ENCODE measurements at regions of chr9 and their contacts with region 1.

Region 1: GRCh38 chr9:132406554-132407122 is at the start of gene TTF1:
- DNase-seq: peak; percentile 88 to 98
- ATAC-seq: peak; percentile 86 to 92 (median 91)
- H3K4me3 ChIP-seq: peak within 1 kb of the TSS; percentile 56
- H3K4me3 Mint-ChIP-seq: peak within 1 kb of the TSS; percentile 96
- H3K27ac ChIP-seq: peak within 1 kb of the TSS; percentile 9
- H3K27ac Mint-ChIP-seq: peak within 1 kb of the TSS; percentile 85 to 94
- H3K4me1 ChIP-seq: peaks cover 43% of the 10 kb centered on the region
- H3K4me1 Mint-ChIP-seq: peaks cover 49 to 55% of the 10 kb centered on the region in 2 donors
- H3K27me3 ChIP-seq: peaks cover 18% of the 10 kb centered on the region
- H3K27me3 Mint-ChIP-seq: peaks cover 11 to 16% of the 10 kb centered on the region in 2 donors
- CTCF ChIP-seq: no peak
- total RNA-seq, gene TTF1: 11.2 to 14.5 (median 12.9) TPM

Region 2: GRCh38 chr9:132354637-132355355 is 51.8 kb before region 1 on chr9 and contains the start of gene SETX:
- intact Hi-C with region 1: loop called (anchors 10 kb)
- DNase-seq: peak; percentile 92 to 97
- ATAC-seq: peak; percentile 81 to 92 (median 85)
- H3K4me3 ChIP-seq: peak within 1 kb of the TSS; percentile 95
- H3K4me3 Mint-ChIP-seq: peak within 1 kb of the TSS; percentile 96
- H3K27ac ChIP-seq: peak within 1 kb of the TSS; percentile 97
- H3K27ac Mint-ChIP-seq: peak within 1 kb of the TSS; percentile 77 to 96
- H3K4me1 ChIP-seq: peaks cover 45% of the 10 kb centered on the region
- H3K4me1 Mint-ChIP-seq: peaks cover 36 to 45% of the 10 kb centered on the region in 2 donors
- H3K27me3 ChIP-seq: no peaks in the 10 kb centered on the region
- H3K27me3 Mint-ChIP-seq: no peaks in the 10 kb centered on the region
- CTCF ChIP-seq: no peak
- total RNA-seq, gene SETX: 85.3 to 109 (median 97.7) TPM

Region 3: DNA sequence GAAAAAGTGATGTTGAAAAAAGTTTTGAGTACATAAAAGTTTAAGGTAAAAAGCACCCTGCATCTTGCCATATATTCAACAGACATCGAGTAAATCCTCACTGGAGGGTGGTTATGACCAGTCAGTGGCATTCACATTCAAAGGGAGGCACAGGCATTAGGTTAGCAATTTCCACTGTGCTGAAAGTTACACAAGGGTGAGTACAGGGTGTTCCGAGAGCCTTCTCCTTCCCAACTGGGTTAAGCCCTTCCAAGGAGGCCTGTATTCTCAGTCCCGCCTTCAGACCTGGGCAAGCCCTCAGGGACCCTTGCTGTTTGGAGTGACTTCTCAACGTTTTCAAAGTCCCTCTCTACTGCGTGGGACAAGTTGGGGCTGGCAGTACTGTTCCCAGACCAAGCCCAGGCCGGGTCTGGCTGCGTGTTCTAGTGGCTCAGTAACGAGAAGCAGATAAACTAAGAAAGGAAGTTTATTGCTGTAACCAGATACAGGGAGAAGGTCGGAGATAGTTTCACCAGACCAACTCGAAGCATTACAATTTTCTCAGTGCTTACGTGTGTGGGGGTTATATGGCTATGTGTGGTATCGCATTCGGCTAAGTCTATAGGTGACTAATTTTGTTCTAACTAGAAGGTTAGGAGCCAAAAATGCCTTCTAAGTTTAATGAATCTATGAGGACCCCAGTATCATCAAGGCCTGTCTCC is 38.9 kb before region 1 on chr9:
- intact Hi-C with region 1: no loop called
- DNase-seq: no peak
- ATAC-seq: no peak
- H3K4me3 ChIP-seq: no peak overlapping the region
- H3K4me3 Mint-ChIP-seq: no peak overlapping the region
- H3K27ac ChIP-seq: no peak overlapping the region
- H3K27ac Mint-ChIP-seq: no peak overlapping the region
- H3K4me1 ChIP-seq: peaks cover 6% of the 10 kb centered on the region
- H3K4me1 Mint-ChIP-seq: peaks cover 8% of the 10 kb centered on the region in 2 donors
- H3K27me3 ChIP-seq: no peaks in the 10 kb centered on the region
- H3K27me3 Mint-ChIP-seq: no peaks in the 10 kb centered on the region
- CTCF ChIP-seq: no peak

Region 4: DNA sequence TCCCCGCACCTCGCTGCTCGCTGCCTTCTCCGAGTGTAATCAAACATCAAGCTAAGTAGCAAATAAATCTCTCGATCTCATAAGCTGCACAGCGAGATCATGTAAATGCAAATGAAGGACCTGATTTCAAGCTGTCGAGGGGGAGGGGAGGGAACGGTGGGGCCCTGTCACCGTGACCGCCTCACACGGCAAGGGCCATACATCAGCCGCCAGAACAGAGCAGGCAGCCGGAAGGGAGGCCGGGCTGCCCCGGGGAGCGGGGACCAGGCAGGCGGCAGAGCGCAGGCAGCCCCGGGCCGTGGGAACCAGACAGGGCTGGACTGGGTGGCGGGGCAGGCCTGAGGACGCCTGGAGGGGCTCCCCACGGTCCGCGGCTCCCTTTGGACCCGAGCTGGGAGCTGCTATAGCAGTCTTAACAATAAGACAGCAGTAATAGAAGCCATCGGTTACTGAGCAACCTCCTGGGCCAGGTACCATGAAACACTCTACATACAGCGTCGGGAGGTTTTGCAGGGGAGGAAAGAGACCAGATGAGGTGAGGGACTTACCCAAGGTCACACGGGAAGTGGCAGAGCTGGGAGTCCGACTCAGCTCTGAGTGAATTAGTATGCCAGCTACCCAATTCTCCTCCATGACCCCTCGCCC is 80.2 kb after region 1 on chr9:
- intact Hi-C with region 1: loop called (anchors 2 kb)
- DNase-seq: peak; percentile 59 to 86
- ATAC-seq: peak; percentile 83 to 88 (median 87)
- H3K4me3 ChIP-seq: no peak overlapping the region
- H3K4me3 Mint-ChIP-seq: peak overlapping the region; percentile 81
- H3K27ac ChIP-seq: peak overlapping the region; percentile 72
- H3K27ac Mint-ChIP-seq: peak overlapping the region; percentile 87 to 93
- H3K4me1 ChIP-seq: peaks cover 31% of the 10 kb centered on the region
- H3K4me1 Mint-ChIP-seq: peaks cover 33 to 36% of the 10 kb centered on the region in 2 donors
- H3K27me3 ChIP-seq: peaks cover 13% of the 10 kb centered on the region
- H3K27me3 Mint-ChIP-seq: peaks cover 27 to 38% of the 10 kb centered on the region in 2 donors
- CTCF ChIP-seq: no peak

Region 5: GRCh38 chr9:132507746-132508469 is 101.3 kb after region 1 on chr9:
- intact Hi-C with region 1: loop called (anchors 5 kb)
- DNase-seq: peak; percentile 60 to 84
- ATAC-seq: peak; percentile 61 to 85 (median 82)
- H3K4me3 ChIP-seq: no peak overlapping the region
- H3K4me3 Mint-ChIP-seq: peak overlapping the region; percentile 13
- H3K27ac ChIP-seq: no peak overlapping the region
- H3K27ac Mint-ChIP-seq: no peak overlapping the region
- H3K4me1 ChIP-seq: peaks cover 19% of the 10 kb centered on the region
- H3K4me1 Mint-ChIP-seq: peaks cover 17% of the 10 kb centered on the region in 2 donors
- H3K27me3 ChIP-seq: no peaks in the 10 kb centered on the region
- H3K27me3 Mint-ChIP-seq: peaks cover 18 to 45% of the 10 kb centered on the region in 2 donors
- CTCF ChIP-seq: peak; percentile 87

Region 6: DNA sequence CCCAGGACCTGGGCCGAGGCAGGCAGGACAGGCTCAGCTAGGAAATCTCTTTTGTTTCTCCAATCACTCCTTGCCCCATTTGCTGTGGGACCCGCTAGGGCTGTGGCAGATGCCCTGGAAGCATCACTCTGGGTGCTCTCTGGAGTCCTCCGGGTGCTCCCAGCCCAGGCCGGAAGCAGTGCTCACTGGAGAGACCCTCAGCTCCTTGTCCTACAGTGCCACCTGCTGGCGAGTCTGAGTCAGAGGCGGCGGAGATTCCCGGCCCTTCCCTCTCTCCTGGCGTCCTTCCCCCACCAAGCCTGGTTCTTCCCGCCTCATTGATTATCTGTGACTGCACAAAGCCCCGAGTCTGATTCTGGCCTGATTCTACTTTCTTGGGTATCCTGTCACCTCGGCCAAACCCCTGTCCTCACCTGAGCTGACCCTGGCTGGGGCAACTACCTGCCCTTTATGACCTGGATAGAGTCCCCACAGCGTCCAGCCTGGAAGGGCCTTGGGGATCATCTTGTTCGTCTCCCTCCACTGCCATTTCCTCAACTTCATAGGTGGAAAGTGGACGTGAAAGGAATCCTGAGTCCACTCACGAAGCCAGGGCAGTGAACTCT is 168.5 kb after region 1 on chr9:
- intact Hi-C with region 1: loop called (anchors 1 kb)
- DNase-seq: peak; percentile 49 to 71
- ATAC-seq: peak; percentile 62 to 93 (median 85)
- H3K4me3 ChIP-seq: no peak overlapping the region
- H3K4me3 Mint-ChIP-seq: no peak overlapping the region
- H3K27ac ChIP-seq: no peak overlapping the region
- H3K27ac Mint-ChIP-seq: no peak overlapping the region
- H3K4me1 ChIP-seq: no peaks in the 10 kb centered on the region
- H3K4me1 Mint-ChIP-seq: peaks cover 0 to 5% of the 10 kb centered on the region in 2 donors
- H3K27me3 ChIP-seq: peaks cover 47% of the 10 kb centered on the region
- H3K27me3 Mint-ChIP-seq: peaks cover 51 to 72% of the 10 kb centered on the region in 2 donors
- CTCF ChIP-seq: peak; percentile 70

Region 7: GRCh38 chr9:132669698-132670456 is 263.2 kb after region 1 on chr9 and contains the start of gene DDX31:
- intact Hi-C with region 1: loop called (anchors 10 kb)
- DNase-seq: peak; percentile 90 to 93
- ATAC-seq: peak; percentile 77 to 92 (median 81)
- H3K4me3 ChIP-seq: peak within 1 kb of the TSS; percentile 74
- H3K4me3 Mint-ChIP-seq: peak within 1 kb of the TSS; percentile 92
- H3K27ac ChIP-seq: peak within 1 kb of the TSS; percentile 88
- H3K27ac Mint-ChIP-seq: peak within 1 kb of the TSS; percentile 91
- H3K4me1 ChIP-seq: peaks cover 15% of the 10 kb centered on the region
- H3K4me1 Mint-ChIP-seq: peaks cover 40 to 46% of the 10 kb centered on the region in 2 donors
- H3K27me3 ChIP-seq: no peaks in the 10 kb centered on the region
- H3K27me3 Mint-ChIP-seq: no peaks in the 10 kb centered on the region
- CTCF ChIP-seq: no peak
- total RNA-seq, gene DDX31: 6.5 to 12.2 (median 11.5) TPM

Region 8: DNA sequence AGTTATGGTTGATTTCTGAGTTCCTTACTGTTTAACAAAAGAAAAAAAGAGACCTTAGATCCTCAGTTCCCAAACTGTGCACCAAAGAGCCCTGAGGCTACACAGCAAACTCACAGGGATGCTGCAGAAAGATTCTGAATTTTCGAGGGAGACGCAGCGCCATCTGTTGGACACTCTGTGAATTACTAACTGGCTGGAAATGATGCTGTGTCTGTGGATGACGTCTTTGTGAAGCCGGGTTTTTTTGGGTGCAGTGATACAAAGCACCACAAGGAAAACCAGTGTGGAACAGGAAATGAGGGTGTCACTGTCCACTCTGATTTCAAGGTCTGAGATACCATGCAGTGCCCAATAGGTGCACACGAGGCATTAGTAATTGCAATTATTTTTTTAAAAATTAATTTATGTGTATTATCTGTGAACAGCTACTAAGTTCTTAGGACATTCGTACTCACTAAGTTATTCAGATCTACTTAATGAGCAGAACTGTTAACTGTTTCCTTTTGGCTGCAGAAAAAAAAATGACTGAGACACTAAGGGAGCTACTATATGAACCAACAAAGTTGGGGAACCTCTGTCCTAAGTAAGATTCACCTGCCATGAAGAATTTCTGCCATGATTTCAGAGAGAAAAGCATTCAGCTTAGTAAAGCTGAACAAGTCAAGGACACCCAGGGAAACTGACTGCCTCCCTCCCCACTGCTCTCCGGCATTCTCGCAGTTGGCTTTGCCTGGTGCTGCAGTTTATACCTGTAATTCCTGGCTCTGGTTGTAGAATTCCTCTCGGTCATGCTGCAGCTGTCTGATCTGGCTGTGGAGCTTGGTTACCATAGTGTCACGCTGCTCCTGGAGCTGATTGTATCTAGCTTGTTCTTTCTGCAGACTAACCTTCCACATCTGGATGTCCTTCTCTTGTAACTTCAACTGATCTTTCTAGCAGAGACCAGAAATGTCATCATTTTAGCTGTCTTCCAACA is 495.5 kb after region 1 on chr9:
- intact Hi-C with region 1: loop called (anchors 5 kb)
- DNase-seq: peak; percentile 75 to 92
- ATAC-seq: peak; percentile 95 to 99 (median 99)
- H3K4me3 ChIP-seq: no peak overlapping the region
- H3K4me3 Mint-ChIP-seq: no peak overlapping the region
- H3K27ac ChIP-seq: no peak overlapping the region
- H3K27ac Mint-ChIP-seq: peak overlapping the region; percentile 10 to 75
- H3K4me1 ChIP-seq: peaks cover 8% of the 10 kb centered on the region
- H3K4me1 Mint-ChIP-seq: peaks cover 0 to 6% of the 10 kb centered on the region in 2 donors
- H3K27me3 ChIP-seq: no peaks in the 10 kb centered on the region
- H3K27me3 Mint-ChIP-seq: no peaks in the 10 kb centered on the region
- CTCF ChIP-seq: peak; percentile 94

Measured in natural killer cell (primary cell).